GM10248 (cell line): ENCODE measurements at regions of chr1 and their contacts with region 1.

Region 1: DNA sequence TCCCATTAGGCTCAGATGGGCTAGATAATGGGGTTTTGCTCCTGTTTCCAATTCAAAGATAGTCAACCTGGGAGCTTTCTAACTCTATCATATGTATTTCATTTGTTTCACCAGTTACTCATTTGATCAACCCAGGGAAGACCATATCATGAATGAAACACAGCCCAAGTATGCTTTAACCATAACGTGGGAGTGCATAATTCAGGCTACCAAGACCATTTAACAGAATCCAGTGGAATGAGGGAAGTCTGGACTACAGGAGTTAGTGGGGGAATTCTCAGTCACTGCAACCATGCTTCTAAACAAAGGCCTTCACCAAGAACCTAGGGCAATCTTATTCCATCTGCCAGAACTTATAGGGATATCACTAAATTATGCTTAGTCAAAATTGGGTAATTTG is 15.0 kb upstream of the SLC16A1 start:
- DNase-seq: no peak
- CTCF ChIP-seq: no peak

Region 2: GRCh38 chr1:112955781-112956543 is 15.0 kb before region 1 on chr1 and contains the start of gene SLC16A1:
- CTCF ChIA-PET with region 1: interaction called, 11 read pairs
- POLR2A ChIA-PET with region 1: interaction called, 3 read pairs
- DNase-seq: peak; percentile 94
- CTCF ChIP-seq: peak; percentile 46

Region 3: DNA sequence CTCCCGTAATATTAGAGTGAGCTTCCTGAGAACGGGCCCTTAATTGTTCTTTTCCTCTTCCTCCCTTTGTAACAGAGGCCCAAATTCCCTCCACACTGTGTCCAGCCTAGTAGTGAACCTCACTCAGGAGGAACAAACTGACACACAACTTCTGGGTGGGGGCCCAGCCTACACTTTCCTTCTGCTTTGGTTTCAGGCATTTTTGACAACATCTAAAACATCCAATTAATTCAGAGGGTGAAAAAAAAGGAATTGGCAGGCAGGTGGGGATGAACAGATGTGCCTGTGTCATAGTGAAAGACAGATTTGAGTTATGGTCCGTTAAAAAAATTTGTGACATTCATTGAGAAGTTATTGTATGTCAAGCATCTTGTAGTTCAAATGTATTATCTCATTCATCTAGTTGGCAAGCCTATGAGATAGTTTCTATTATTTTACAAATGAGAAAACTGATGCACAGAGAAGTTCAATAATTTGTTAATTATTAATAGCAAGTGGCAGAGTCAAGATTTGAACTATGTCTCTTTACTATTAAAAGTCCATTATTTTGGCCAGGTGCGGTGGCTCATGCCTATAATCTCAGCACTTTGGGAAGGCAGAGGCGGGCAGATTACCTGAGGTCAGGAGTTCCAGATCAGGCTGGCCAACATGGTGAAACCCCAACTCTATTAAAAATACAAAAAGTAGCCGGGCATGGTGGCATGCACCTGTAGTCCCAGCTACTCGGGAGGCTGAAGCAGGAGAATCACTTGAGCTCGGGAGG is 60.3 kb after region 1 on chr1:
- CTCF ChIA-PET with region 1: no interaction called
- POLR2A ChIA-PET with region 1: no interaction called
- DNase-seq: peak; percentile 45
- CTCF ChIP-seq: no peak

Region 4: DNA sequence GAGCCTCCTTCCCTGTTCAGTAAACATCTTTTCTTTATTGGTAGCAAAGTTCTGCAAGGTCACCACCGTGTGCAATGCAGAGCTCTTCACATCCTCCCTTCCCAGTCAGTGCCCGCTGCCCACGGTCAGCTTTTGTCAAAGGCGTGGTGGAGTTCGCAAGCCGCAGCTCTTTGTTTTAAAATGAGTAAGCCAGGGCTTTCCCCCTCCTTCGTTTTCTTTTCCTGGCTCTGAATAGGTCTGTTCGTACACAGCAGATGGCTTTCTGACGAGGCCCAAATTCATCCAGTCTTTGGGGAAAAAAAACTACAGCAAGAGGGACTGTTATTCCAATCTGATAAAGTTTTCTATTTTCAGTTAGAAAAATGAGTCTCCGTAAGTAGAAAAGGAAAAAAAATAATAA is 255.1 kb after region 1 on chr1:
- CTCF ChIA-PET with region 1: no interaction called
- POLR2A ChIA-PET with region 1: no interaction called
- DNase-seq: peak; percentile 46
- CTCF ChIP-seq: no peak